ENCODE measurements at regions of chr22 and their contacts with region 1.

Region 1: GRCh38 chr22:43187171-43188099 is 501 bp upstream of the TTLL12 start:
- DNase-seq: peak; percentile 84 to 94
- ATAC-seq: peak; percentile 83 to 88
- H3K4me3 ChIP-seq: peak overlapping the region; percentile 56 to 66 (median 62)
- H3K27ac ChIP-seq: peak overlapping the region; percentile 77 to 87 (median 80)
- H3K4me1 ChIP-seq: peaks cover 10 to 12% of the 10 kb centered on the region in 2 donors
- H3K27me3 ChIP-seq: no peaks in the 10 kb centered on the region
- CTCF ChIP-seq: peak; percentile 55 to 81 (median 75)
- POLR2A ChIP-seq: peak; percentile 37 to 45

Region 2: DNA sequence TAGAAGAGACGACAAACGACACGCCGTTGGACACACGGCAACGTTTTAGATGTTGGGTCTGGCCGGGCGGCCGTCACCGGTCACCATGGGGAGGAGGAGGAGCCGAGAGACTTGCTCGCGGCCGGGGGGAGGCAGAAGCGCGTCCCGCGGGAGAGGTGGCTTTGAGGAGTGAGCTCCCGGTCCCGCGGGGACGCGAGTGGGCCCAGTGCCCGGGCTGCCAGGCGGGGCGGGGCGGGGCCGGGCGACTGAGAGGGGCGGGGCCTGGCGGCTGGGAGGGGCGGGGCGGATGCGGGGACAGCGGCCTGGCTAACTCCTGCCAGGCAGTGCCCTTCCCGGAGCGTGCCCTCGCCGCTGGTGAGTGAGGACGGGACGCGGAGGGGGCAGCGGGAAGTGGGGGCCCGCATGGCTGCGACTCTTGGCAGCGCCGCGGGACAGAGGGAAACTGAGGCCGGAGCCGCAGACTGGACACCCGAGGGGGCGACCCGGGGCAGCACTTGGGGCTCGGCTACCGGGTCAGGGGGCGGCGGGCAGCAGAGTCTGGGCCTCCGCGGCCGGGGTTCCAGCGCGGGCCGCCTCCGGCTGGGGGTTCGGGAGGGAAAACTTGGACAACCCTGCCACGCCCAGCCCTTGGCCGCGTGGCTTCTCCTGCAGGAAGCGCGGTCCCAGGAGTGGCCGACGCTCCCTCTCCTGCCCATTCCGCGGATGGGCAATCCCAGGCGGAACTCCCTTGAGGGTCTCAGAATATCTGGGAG is 36.0 kb before region 1 on chr22 and contains the start of gene TSPO:
- in situ Hi-C with region 1: no loop called
- intact Hi-C with region 1: loop called (anchors 1 kb)
- DNase-seq: peak; percentile 59 to 75
- ATAC-seq: peak; percentile 80 to 82
- H3K4me3 ChIP-seq: peak within 1 kb of the TSS; percentile 73 to 87 (median 79)
- H3K27ac ChIP-seq: peak within 1 kb of the TSS; percentile 74 to 85 (median 81)
- H3K4me1 ChIP-seq: peaks cover 13 to 27% of the 10 kb centered on the region in 2 donors
- H3K27me3 ChIP-seq: no peaks in the 10 kb centered on the region
- CTCF ChIP-seq: no peak
- POLR2A ChIP-seq: peak; percentile 69 to 72
- total RNA-seq, gene TSPO: 101 to 174 (median 113) TPM

Region 3: DNA sequence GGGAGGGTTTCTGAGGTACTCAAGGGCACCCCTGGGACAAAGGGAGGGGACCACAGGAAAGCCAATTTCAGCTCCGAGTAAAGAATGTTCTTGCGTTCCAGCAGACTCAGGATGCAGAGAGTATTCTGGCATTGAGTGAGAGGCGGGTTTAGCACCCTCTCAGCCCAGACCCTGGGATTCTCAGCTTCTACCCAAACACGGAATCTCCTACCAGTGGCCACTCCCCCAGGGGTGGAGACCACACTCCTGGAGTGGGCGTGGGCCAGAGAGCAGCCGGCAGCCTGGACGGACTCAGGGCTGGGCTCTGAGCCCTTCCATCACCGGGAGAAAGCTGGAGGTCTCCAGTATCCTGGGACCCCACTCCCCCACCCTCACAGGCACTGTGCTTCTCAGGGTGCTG is 25.6 kb after region 1 on chr22:
- in situ Hi-C with region 1: no loop called
- intact Hi-C with region 1: no loop called
- DNase-seq: no peak
- ATAC-seq: no peak
- H3K4me3 ChIP-seq: no peak overlapping the region
- H3K27ac ChIP-seq: no peak overlapping the region
- H3K4me1 ChIP-seq: no peaks in the 10 kb centered on the region
- H3K27me3 ChIP-seq: no peaks in the 10 kb centered on the region
- CTCF ChIP-seq: no peak
- POLR2A ChIP-seq: no peak